ENCODE measurements at regions of chr19 and their contacts with region 1.

Region 1: DNA sequence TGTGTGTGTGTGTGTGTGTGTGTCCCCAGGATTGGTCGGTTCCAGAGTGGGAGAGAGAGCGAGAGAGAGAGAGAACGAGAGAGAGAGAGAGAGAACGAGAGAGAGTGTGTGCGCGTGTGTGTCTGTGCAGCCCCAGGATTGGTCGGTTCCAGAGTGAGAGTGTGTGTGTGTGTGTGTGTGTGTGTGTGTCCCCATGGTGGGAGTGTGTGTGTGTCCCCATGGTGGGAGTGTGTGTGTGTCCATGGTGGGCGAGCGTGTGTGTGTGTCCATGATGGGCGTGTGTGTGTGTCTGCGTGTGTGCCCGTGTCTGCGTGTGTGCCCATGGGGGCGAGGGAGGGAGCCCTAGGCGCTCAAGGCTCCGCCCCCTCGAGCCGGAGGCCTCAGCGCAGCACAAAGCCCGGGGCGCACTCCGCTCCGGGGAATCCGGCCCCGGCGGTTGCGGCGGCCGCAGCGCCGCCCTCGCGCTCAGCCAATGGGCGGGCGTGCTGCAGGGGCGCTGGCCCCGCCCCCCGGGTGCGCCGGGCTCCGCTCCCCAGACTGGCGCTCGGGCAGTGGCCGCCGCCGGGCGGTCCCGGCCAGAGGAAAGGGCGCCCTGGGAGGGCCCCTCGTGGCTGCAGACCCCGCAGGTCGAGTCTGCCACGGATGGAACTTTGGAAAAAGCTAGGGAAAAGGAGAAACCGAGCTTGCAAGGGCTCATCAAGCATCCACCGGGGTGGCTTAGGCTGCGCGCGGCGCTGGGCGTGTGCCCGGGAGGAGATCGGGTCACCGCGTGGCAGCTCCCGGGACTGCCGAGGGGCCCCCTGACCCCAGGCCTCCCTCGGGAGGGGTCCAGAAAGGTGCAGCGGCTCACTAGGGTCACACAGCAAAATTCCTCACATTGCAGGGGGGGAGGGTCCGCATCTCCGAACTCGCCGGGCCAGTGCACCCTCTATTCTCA is 96.2 kb downstream of the INSR start:
- DNase-seq: peak; percentile 90 to 95
- H3K4me3 ChIP-seq: peak overlapping the region; percentile 39
- H3K4me3 Mint-ChIP-seq: peak overlapping the region; percentile 92
- H3K27ac Mint-ChIP-seq: peak overlapping the region; percentile 91
- H3K4me1 ChIP-seq: peaks cover 21% of the 10 kb centered on the region
- H3K4me1 Mint-ChIP-seq: peaks cover 14% of the 10 kb centered on the region
- H3K27me3 ChIP-seq: no peaks in the 10 kb centered on the region
- H3K27me3 Mint-ChIP-seq: no peaks in the 10 kb centered on the region
- CTCF ChIP-seq: no peak

Region 2: GRCh38 chr19:7159105-7159933 is 38.7 kb before region 1 on chr19:
- CTCF ChIA-PET with region 1: no interaction called
- POLR2A ChIA-PET with region 1: no interaction called
- intact Hi-C with region 1: no loop called
- DNase-seq: no peak
- H3K4me3 ChIP-seq: no peak overlapping the region
- H3K4me3 Mint-ChIP-seq: no peak overlapping the region
- H3K27ac Mint-ChIP-seq: no peak overlapping the region
- H3K4me1 ChIP-seq: no peaks in the 10 kb centered on the region
- H3K4me1 Mint-ChIP-seq: no peaks in the 10 kb centered on the region
- H3K27me3 ChIP-seq: no peaks in the 10 kb centered on the region
- H3K27me3 Mint-ChIP-seq: no peaks in the 10 kb centered on the region
- CTCF ChIP-seq: no peak

Region 3: DNA sequence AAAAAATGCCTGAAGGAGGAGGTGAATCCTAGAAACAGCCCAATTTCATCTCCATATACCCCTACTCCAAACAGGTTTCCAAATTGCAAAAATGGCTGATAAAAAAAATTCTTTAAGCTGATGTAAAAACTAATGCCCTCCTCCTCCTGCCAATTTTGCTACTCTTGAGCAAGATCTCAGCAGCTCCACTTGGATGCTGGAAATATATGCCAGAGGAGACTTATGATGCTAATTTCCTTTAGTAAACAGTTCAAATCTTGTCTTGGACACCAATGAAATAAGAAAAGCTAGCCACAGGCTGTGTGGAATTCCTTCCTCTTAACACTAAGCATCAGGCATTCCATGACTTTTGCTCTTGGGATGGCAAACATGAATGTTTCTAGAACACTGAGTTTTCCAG is 28.7 kb after region 1 on chr19:
- CTCF ChIA-PET with region 1: no interaction called
- POLR2A ChIA-PET with region 1: interaction called, 10 read pairs
- intact Hi-C with region 1: no loop called
- DNase-seq: no peak
- H3K4me3 ChIP-seq: no peak overlapping the region
- H3K4me3 Mint-ChIP-seq: no peak overlapping the region
- H3K27ac Mint-ChIP-seq: no peak overlapping the region
- H3K4me1 ChIP-seq: no peaks in the 10 kb centered on the region
- H3K4me1 Mint-ChIP-seq: peaks cover 5% of the 10 kb centered on the region
- H3K27me3 ChIP-seq: no peaks in the 10 kb centered on the region
- H3K27me3 Mint-ChIP-seq: no peaks in the 10 kb centered on the region
- CTCF ChIP-seq: no peak

Region 4: DNA sequence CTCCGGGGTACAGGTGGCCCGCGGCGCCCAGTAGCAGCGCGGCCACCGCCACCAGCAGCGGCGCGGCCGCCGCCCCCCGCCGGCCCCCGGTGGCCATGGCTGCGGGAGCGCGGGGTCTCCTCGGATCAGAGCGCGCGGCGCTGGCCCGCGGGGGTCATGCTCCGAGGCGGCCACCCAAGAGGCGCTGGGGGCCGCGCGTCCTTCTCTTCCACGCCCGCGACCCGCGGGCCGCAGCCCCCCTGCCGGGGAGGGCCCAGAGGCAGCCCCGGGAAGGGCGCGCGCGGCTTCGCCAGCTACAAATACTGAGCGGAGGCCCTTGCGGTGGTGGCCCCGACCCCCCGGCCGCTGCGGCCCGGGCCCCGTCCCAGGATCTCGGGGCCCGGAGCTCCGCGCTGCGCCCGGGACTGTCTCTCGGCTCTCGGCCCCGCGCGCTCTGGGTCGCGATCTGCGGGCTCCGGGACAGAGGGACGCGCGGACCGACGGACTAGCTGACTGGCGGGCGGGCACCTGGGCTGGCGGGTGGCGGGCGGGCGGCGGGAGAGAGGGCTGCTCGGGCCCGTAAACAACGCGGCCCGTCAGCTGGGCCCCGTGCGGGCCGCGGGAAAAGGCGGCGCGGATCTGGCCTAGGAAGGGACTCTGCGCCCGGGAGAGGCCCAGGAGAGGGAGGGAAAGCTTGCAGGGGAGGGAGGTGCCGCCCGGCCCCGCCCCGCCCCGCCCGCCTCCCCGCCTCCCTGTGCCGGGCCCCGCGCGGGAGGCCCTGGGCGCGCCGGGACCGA is 96.0 kb after region 1 on chr19 and contains the start of gene INSR:
- CTCF ChIA-PET with region 1: interaction called, 8 read pairs
- POLR2A ChIA-PET with region 1: interaction called, 3 read pairs
- intact Hi-C with region 1: loop called (anchors 1 kb)
- DNase-seq: peak; percentile 89 to 94
- H3K4me3 ChIP-seq: peak within 1 kb of the TSS; percentile 73
- H3K4me3 Mint-ChIP-seq: peak within 1 kb of the TSS; percentile 89
- H3K27ac Mint-ChIP-seq: peak within 1 kb of the TSS; percentile 87
- H3K4me1 ChIP-seq: peaks cover 9% of the 10 kb centered on the region; the same call in 1 of the 2 replicates
- H3K4me1 Mint-ChIP-seq: peaks cover 3% of the 10 kb centered on the region
- H3K27me3 ChIP-seq: no peaks in the 10 kb centered on the region
- H3K27me3 Mint-ChIP-seq: no peaks in the 10 kb centered on the region
- CTCF ChIP-seq: no peak
- total RNA-seq, gene INSR: 22.6 and 23.3 TPM in 2 replicates